ENCODE measurements at regions of chr17 and their contacts with region 1.

Region 1: GRCh38 chr17:77772461-77772897 is 186.0 kb upstream of the TNRC6C start:
- DNase-seq: peak; percentile 69
- ATAC-seq: peak; percentile 88 to 93

Region 2: DNA sequence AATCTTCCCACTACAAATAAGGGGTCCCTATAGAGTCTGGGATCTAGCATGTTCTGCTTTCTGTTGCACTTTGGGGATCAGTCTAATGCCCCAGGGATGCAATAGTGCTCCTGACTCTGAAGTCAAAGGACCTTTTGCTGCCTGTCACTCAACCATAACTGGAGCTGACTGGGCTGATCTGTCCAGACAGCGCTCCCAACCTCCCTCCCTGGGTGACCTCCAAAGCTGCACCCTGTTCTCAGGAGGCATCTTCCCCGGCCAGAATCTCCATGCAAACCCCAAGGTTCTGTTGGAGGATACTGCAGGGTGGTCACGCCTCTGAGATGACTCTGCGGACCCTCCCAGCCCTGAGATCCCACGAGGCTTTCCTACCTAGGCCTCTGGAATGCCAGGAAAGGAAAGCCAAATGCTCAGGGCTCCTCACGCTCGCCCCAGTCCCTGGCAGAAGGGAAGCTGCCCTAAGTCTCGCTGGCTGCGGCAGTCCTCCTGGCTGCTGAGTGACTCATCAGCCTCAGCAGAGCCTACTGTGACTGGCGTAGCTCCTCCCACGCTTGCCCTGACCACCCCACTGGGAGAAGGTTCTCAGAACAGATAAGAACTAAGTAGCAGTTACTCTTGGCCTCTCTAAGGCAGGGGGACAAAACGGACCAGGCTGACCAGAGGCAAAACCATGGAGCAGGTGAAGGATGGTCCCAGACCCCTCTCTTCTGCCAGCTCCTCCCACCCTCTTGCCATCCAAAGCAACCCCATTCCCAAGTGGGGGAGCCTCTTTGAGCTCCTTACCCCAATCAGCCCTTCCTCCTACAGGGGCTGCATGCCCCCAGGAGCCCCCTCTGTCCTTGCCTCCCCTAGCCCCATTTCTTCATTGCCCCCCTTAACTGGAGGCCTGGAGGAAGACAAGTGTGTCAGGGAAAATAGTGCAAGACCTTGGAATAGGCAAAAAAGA is 62.0 kb after region 1 on chr17:
- intact Hi-C with region 1: loop called in 1 of 2 experiments (anchors 10 kb)
- DNase-seq: peak; percentile 84
- ATAC-seq: peak; percentile 77 to 80

Region 3: DNA sequence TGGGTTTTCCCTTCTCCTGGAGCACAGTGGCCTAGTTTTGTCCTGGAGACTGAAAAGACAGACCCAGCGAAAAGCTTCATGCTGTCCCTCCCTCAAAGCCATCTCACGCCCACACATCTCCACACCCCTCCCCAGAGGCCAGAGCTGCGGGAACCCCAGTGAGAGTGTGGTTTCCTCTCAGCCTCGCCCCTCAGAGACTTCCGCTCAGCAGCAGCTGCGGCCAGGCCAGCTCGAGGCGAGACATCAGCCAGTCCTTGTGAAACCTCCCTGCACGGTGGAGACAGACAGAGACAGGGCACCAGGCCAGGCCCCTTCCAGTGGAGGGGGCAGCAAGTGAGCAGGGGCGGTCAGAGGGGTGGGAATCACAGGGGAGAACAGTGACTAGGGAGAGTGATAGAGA is 109.1 kb after region 1 on chr17:
- intact Hi-C with region 1: loop called in 1 of 2 experiments (anchors 10 kb)
- DNase-seq: peak; percentile 91
- ATAC-seq: peak; percentile 90 to 92

Region 4: GRCh38 chr17:78013683-78014467 is 241.4 kb after region 1 on chr17:
- intact Hi-C with region 1: loop called in 1 of 2 experiments (anchors 1 kb)
- DNase-seq: peak; percentile 31
- ATAC-seq: peak; percentile 72 to 73

Measured in left cardiac atrium (tissue), 4 donors.